ENCODE measurements at regions of chr1 and their contacts with region 1.

Region 1: GRCh38 chr1:42035830-42036604 is 117.2 kb upstream of the GUCA2B start:
- DNase-seq: peak; percentile 98
- ATAC-seq: peak; percentile 97 to 98

Region 2: GRCh38 chr1:41812051-41812450 is 224.0 kb before region 1 on chr1:
- intact Hi-C with region 1: loop called in 1 of 2 experiments (anchors 2 kb)
- DNase-seq: peak; percentile 46
- ATAC-seq: peak in 1 of 2 donors; percentile 12

Region 3: GRCh38 chr1:41868599-41868998 is 167.4 kb before region 1 on chr1:
- intact Hi-C with region 1: no loop called
- DNase-seq: no peak
- ATAC-seq: no peak

Region 4: GRCh38 chr1:41919764-41920397 is 116.1 kb before region 1 on chr1:
- intact Hi-C with region 1: loop called in 1 of 2 experiments (anchors 10 kb)
- DNase-seq: peak; percentile 65
- ATAC-seq: peak; percentile 75 to 86

Measured in left cardiac atrium (tissue), 4 donors.